Prostate gland (tissue), 2 donors: ENCODE measurements at regions of chr10 and their contacts with region 1.

Region 1: DNA sequence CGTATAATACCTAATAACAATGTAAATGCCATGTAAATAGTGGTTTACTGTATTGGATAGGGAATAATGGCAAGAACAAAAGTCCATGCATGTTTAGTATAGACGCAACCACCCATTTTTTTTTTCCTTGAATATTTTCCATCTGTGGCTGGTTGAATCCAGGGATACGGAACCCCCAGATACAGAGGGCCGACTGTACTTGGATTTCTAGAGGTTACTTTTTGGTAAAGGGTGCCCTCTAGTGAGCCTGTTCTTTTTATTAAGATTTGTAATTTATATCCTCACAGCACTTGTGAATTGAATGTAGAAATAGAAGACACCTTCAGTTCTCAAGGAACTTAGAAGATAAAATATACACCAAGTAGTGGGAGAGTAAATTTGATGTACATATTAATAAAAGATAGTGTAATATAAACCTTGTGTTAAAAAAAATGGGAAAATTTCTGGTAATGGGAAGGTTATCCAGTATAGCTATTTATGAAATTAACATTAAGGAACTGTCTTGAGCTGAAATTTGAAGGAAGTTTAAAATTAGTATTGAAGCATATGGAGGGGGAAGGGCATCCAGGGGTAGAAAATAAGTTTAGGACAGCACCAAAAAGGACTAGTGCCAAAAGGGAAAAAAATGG is 32.0 kb downstream of the EXOC6 start:
- DNase-seq: peak; percentile 6
- H3K4me3 ChIP-seq: no peak overlapping the region
- H3K27ac ChIP-seq: no peak overlapping the region
- H3K4me1 ChIP-seq: no peaks in the 10 kb centered on the region
- H3K27me3 ChIP-seq: no peaks in the 10 kb centered on the region
- CTCF ChIP-seq: peak in 3 of 4 experiments; percentile 18 to 49 (median 41)
- POLR2A ChIP-seq: no peak

Region 2: DNA sequence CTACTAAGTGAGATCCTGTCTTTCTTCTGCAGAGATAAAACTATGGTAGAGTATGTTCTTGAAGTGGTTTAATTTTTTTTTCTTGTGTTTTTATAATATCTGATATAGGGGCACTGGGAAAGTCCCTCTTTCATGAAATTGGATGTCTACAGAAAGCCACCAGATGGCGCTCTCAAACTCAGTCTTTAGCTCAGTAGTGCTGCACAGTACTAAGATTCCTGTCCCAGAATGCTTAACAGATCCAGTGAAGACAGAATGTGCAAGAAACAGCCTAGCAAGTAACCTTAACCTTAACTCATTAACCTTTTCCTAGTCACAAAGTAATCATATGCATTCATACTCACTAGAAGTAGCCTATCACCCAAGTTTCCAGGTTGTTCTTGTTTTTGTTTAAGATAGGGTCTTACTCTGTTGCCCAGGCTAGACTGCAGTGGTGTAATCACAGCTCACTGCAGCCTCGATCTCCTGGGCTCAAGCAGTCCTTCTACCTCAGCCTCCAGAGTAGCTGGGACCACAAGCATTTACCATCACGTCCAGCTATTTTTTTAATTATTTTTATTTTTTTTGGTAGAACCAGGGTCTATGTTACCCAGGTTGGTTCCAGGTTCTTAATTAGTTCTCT is 363.2 kb before region 1 on chr10:
- intact Hi-C with region 1: loop called (anchors 5 kb)
- DNase-seq: peak; percentile 69
- H3K4me3 ChIP-seq: no peak overlapping the region
- H3K27ac ChIP-seq: no peak overlapping the region
- H3K4me1 ChIP-seq: no peaks in the 10 kb centered on the region
- H3K27me3 ChIP-seq: no peaks in the 10 kb centered on the region
- CTCF ChIP-seq: peak; percentile 63 to 83 (median 78)
- POLR2A ChIP-seq: no peak

Region 3: GRCh38 chr10:92839191-92840085 is 40.9 kb before region 1 on chr10:
- intact Hi-C with region 1: loop called (anchors 5 kb)
- DNase-seq: no peak
- H3K4me3 ChIP-seq: no peak overlapping the region
- H3K27ac ChIP-seq: no peak overlapping the region
- H3K4me1 ChIP-seq: no peaks in the 10 kb centered on the region
- H3K27me3 ChIP-seq: no peaks in the 10 kb centered on the region
- CTCF ChIP-seq: peak in 1 of 4 experiments; percentile 12
- POLR2A ChIP-seq: no peak